ENCODE measurements at regions of chr2 and their contacts with region 1.

Region 1: GRCh38 chr2:28904802-28905499 is 10.5 kb downstream of the WDR43 start:
- DNase-seq: no peak
- ATAC-seq: no peak
- H3K4me3 Mint-ChIP-seq: no peak overlapping the region
- H3K27ac Mint-ChIP-seq: peak overlapping the region; percentile 59
- H3K4me1 Mint-ChIP-seq: peaks cover 42% of the 10 kb centered on the region
- H3K27me3 Mint-ChIP-seq: no peaks in the 10 kb centered on the region

Region 2: DNA sequence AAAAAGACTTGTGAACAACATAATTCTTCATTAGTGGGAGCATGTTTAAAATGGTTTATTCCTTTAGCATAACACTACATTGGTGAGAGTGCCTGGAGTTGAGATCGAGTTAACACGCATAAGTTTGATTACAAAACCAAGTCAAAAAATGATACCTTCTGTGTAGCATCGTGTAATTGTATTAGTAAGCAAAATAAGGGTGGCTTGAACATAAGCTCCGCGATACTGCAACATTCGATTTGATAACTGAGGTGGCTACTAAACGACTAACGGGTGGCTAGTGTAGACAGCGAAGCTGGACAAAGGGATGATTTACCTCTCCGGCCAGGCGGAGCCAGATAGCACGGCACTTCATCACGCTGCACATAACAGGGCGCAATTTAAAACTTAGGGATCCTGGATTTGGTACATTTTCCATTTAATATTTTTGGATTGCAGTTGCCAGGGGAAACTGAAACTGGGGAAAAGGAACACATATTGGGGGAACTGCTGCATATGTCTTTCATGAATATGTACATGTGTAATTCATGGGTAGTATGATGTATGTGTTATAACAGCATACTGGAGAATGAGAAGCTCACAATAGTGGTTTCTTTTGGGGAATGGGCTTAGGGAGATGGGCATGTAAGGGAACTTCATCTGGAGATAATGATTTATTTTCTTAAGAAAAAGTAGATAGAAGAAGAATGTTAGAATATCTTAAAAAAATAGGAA is 39.7 kb after region 1 on chr2:
- CTCF ChIA-PET with region 1: no interaction called
- POLR2A ChIA-PET with region 1: no interaction called
- intact Hi-C with region 1: loop called in 1 of 2 experiments (anchors 5 kb)
- DNase-seq: no peak
- ATAC-seq: no peak
- H3K4me3 Mint-ChIP-seq: no peak overlapping the region
- H3K27ac Mint-ChIP-seq: no peak overlapping the region
- H3K4me1 Mint-ChIP-seq: no peaks in the 10 kb centered on the region
- H3K27me3 Mint-ChIP-seq: no peaks in the 10 kb centered on the region

Region 3: GRCh38 chr2:28981016-28981441 is 76.1 kb after region 1 on chr2 and contains the start of gene TOGARAM2:
- CTCF ChIA-PET with region 1: no interaction called
- POLR2A ChIA-PET with region 1: no interaction called
- intact Hi-C with region 1: no loop called
- DNase-seq: no peak
- ATAC-seq: no peak
- H3K4me3 Mint-ChIP-seq: no peak within 1 kb of the TSS
- H3K27ac Mint-ChIP-seq: no peak within 1 kb of the TSS
- H3K4me1 Mint-ChIP-seq: no peaks in the 10 kb centered on the region
- H3K27me3 Mint-ChIP-seq: no peaks in the 10 kb centered on the region
- total RNA-seq, gene TOGARAM2: 2.7 to 3.3 TPM

Region 4: GRCh38 chr2:29475499-29475898 is 570.5 kb after region 1 on chr2:
- CTCF ChIA-PET with region 1: no interaction called
- POLR2A ChIA-PET with region 1: no interaction called
- intact Hi-C with region 1: no loop called
- DNase-seq: no peak
- ATAC-seq: no peak
- H3K4me3 Mint-ChIP-seq: no peak overlapping the region
- H3K27ac Mint-ChIP-seq: no peak overlapping the region
- H3K4me1 Mint-ChIP-seq: no peaks in the 10 kb centered on the region
- H3K27me3 Mint-ChIP-seq: peaks cover 5% of the 10 kb centered on the region

Measured in activated CD4-positive, alpha-beta T cell treated with anti-CD3 and anti-CD28 coated beads for 36 hours (primary cell).